ENCODE measurements at regions of chr12 and their contacts with region 1.

Region 1: GRCh38 chr12:132414634-132415326 is 75.2 kb upstream of the FBRSL1 start:
- DNase-seq: peak; percentile 86
- ATAC-seq: peak; percentile 91
- H3K4me3 ChIP-seq: peak overlapping the region in 3 of 5 experiments; percentile 11 to 22 (median 15)
- H3K4me3 Mint-ChIP-seq: no peak overlapping the region
- H3K27ac ChIP-seq: no peak overlapping the region
- H3K27ac Mint-ChIP-seq: no peak overlapping the region
- H3K4me1 ChIP-seq: peaks cover 15 to 20% of the 10 kb centered on the region in 2 donors
- H3K4me1 Mint-ChIP-seq: peaks cover 7% of the 10 kb centered on the region
- H3K27me3 ChIP-seq: peaks cover 0 to 4% (median 0%) of the 10 kb centered on the region in 4 experiments
- H3K27me3 Mint-ChIP-seq: no peaks in the 10 kb centered on the region
- CTCF ChIP-seq: peak; percentile 86

Region 2: GRCh38 chr12:131850856-131851559 is 563.8 kb before region 1 on chr12:
- CTCF ChIA-PET with region 1: no interaction called
- POLR2A ChIA-PET with region 1: no interaction called
- intact Hi-C with region 1: no loop called
- DNase-seq: no peak
- ATAC-seq: peak; percentile 52
- H3K4me3 ChIP-seq: no peak overlapping the region
- H3K4me3 Mint-ChIP-seq: no peak overlapping the region
- H3K27ac ChIP-seq: no peak overlapping the region
- H3K27ac Mint-ChIP-seq: no peak overlapping the region
- H3K4me1 ChIP-seq: peaks cover 18 to 19% of the 10 kb centered on the region in 2 donors
- H3K4me1 Mint-ChIP-seq: peaks cover 18% of the 10 kb centered on the region
- H3K27me3 ChIP-seq: peaks cover 0 to 2% (median 0%) of the 10 kb centered on the region in 4 experiments
- H3K27me3 Mint-ChIP-seq: peaks cover under 1% of the 10 kb centered on the region
- CTCF ChIP-seq: peak; percentile 60

Region 3: GRCh38 chr12:132429946-132430643 is 15.3 kb after region 1 on chr12:
- CTCF ChIA-PET with region 1: interaction called, 66 read pairs
- POLR2A ChIA-PET with region 1: interaction called, 4 read pairs
- intact Hi-C with region 1: loop called (anchors 2 kb)
- DNase-seq: peak; percentile 90
- ATAC-seq: peak; percentile 88
- H3K4me3 ChIP-seq: peak overlapping the region in 3 of 5 experiments; percentile 14 to 41 (median 18)
- H3K4me3 Mint-ChIP-seq: peak overlapping the region; percentile 78
- H3K27ac ChIP-seq: peak overlapping the region; percentile 35 to 37
- H3K27ac Mint-ChIP-seq: peak overlapping the region; percentile 82
- H3K4me1 ChIP-seq: peaks cover 60 to 70% of the 10 kb centered on the region in 2 donors
- H3K4me1 Mint-ChIP-seq: peaks cover 63% of the 10 kb centered on the region
- H3K27me3 ChIP-seq: no peaks in the 10 kb centered on the region
- H3K27me3 Mint-ChIP-seq: no peaks in the 10 kb centered on the region
- CTCF ChIP-seq: no peak

Region 4: GRCh38 chr12:132489602-132490239 is 74.9 kb after region 1 on chr12 and contains the start of gene FBRSL1:
- CTCF ChIA-PET with region 1: interaction called, 8 read pairs
- POLR2A ChIA-PET with region 1: interaction called, 7 read pairs
- intact Hi-C with region 1: loop called (anchors 1 kb)
- DNase-seq: peak; percentile 93
- ATAC-seq: peak; percentile 79
- H3K4me3 ChIP-seq: peak within 1 kb of the TSS; percentile 55 to 86 (median 78)
- H3K4me3 Mint-ChIP-seq: peak within 1 kb of the TSS; percentile 91
- H3K27ac ChIP-seq: peak within 1 kb of the TSS; percentile 75 to 95
- H3K27ac Mint-ChIP-seq: peak within 1 kb of the TSS; percentile 96
- H3K4me1 ChIP-seq: peaks cover 32 to 63% of the 10 kb centered on the region in 2 donors
- H3K4me1 Mint-ChIP-seq: peaks cover 63% of the 10 kb centered on the region
- H3K27me3 ChIP-seq: no peaks in the 10 kb centered on the region
- H3K27me3 Mint-ChIP-seq: no peaks in the 10 kb centered on the region
- CTCF ChIP-seq: no peak
- total RNA-seq, gene FBRSL1: 112 and 121 TPM in 2 replicates

Region 5: DNA sequence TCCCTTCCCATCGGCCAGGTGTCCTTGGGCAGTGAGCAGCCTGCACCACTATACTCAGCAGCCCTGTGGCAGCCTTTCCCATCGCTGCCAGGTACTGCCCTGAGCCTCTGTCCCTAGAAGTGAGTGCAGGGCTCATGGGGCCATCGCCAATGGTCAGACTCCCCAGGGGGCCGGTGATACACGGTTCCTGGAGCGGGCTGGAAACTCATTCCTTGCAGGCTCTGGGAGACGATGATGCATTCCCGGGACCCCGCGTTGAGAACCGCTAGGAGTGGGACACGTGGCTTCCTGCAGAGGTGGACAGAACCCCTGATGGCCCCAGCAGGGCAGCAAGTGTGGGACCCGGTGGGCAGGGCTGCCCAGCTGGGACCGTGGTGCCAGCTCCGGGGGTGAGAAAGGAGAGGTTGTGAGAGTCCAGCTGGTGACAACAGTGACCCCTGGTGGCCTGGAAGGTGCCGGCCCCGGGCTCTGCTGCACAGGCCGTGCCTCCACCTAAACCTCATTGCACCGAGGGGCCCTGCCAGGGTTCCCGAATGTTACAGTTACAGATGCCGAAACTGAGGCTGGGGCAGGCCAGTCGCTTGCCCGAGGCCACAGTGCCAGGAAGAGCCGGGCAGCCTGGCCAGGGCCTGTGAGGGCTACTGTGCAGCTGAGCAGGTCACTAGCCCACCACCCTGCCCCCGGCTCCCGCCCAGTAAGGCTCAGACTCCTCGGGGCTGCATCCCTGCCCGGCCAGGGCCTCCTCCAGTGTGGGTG is 109.0 kb after region 1 on chr12:
- CTCF ChIA-PET with region 1: interaction called, 236 read pairs
- POLR2A ChIA-PET with region 1: interaction called, 12 read pairs
- intact Hi-C with region 1: no loop called
- DNase-seq: peak; percentile 82
- ATAC-seq: peak; percentile 79
- H3K4me3 ChIP-seq: no peak overlapping the region
- H3K4me3 Mint-ChIP-seq: no peak overlapping the region
- H3K27ac ChIP-seq: no peak overlapping the region
- H3K27ac Mint-ChIP-seq: no peak overlapping the region
- H3K4me1 ChIP-seq: peaks cover 5 to 12% of the 10 kb centered on the region in 2 donors
- H3K4me1 Mint-ChIP-seq: peaks cover 11% of the 10 kb centered on the region
- H3K27me3 ChIP-seq: no peaks in the 10 kb centered on the region
- H3K27me3 Mint-ChIP-seq: no peaks in the 10 kb centered on the region
- CTCF ChIP-seq: peak; percentile 90

Region 6: GRCh38 chr12:132614861-132615578 is 200.2 kb after region 1 on chr12:
- CTCF ChIA-PET with region 1: interaction called, 73 read pairs
- POLR2A ChIA-PET with region 1: no interaction called
- intact Hi-C with region 1: loop called (anchors 1 kb)
- DNase-seq: peak; percentile 86
- ATAC-seq: peak; percentile 84
- H3K4me3 ChIP-seq: no peak overlapping the region
- H3K4me3 Mint-ChIP-seq: peak overlapping the region; percentile 16
- H3K27ac ChIP-seq: no peak overlapping the region
- H3K27ac Mint-ChIP-seq: peak overlapping the region; percentile 32
- H3K4me1 ChIP-seq: peaks cover 14 to 19% of the 10 kb centered on the region in 2 donors
- H3K4me1 Mint-ChIP-seq: peaks cover 16% of the 10 kb centered on the region
- H3K27me3 ChIP-seq: peaks cover 0 to 53% (median 33%) of the 10 kb centered on the region in 4 experiments
- H3K27me3 Mint-ChIP-seq: peaks cover 41% of the 10 kb centered on the region
- CTCF ChIP-seq: peak; percentile 89

Measured in B cell (primary cell).